CD4-positive, alpha-beta T cell (primary cell): ENCODE measurements at regions of chr18 and their contacts with region 1.

Region 1: GRCh38 chr18:41999751-42000150 is 44.7 kb downstream of the PIK3C3 start:
- DNase-seq: no peak
- ATAC-seq: no peak
- H3K4me3 ChIP-seq: no peak overlapping the region
- H3K4me3 Mint-ChIP-seq: no peak overlapping the region
- H3K27ac ChIP-seq: no peak overlapping the region
- H3K27ac Mint-ChIP-seq: no peak overlapping the region
- H3K4me1 ChIP-seq: no peaks in the 10 kb centered on the region
- H3K4me1 Mint-ChIP-seq: no peaks in the 10 kb centered on the region
- H3K27me3 ChIP-seq: no peaks in the 10 kb centered on the region
- H3K27me3 Mint-ChIP-seq: no peaks in the 10 kb centered on the region
- CTCF ChIP-seq: no peak

Region 2: GRCh38 chr18:42038936-42039335 is 39.2 kb after region 1 on chr18:
- CTCF ChIA-PET with region 1: no interaction called
- POLR2A ChIA-PET with region 1: no interaction called
- intact Hi-C with region 1: loop called in 1 of 2 experiments (anchors 5 kb)
- DNase-seq: no peak
- ATAC-seq: no peak
- H3K4me3 ChIP-seq: no peak overlapping the region
- H3K4me3 Mint-ChIP-seq: no peak overlapping the region
- H3K27ac ChIP-seq: no peak overlapping the region
- H3K27ac Mint-ChIP-seq: no peak overlapping the region
- H3K4me1 ChIP-seq: no peaks in the 10 kb centered on the region
- H3K4me1 Mint-ChIP-seq: no peaks in the 10 kb centered on the region
- H3K27me3 ChIP-seq: no peaks in the 10 kb centered on the region
- H3K27me3 Mint-ChIP-seq: no peaks in the 10 kb centered on the region
- CTCF ChIP-seq: no peak